Transverse colon (tissue), 4 donors: ENCODE measurements at regions of chr17 and their contacts with region 1.

Region 1: DNA sequence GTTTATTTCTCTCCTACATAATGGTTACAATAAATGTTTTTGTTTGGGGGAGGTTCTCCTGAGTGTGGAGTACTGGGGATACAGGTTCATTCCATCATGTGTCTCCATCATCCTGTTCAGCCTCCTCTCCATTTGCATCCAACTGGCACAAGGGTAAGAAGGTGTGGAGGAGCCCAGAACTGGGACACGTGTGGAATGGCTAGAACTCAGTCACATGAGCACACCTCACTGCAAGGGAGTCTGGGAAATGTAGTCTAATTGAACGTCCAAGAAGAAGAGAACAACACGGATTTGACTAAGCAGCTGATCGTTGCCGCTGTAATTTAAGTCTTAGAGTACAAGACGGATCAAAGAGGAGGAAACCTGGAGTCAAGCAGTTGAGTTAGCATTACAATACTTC is 6.1 kb downstream of the OR1A1 start:
- DNase-seq: no peak
- H3K4me3 ChIP-seq: no peak overlapping the region
- H3K27ac ChIP-seq: no peak overlapping the region
- H3K4me1 ChIP-seq: no peaks in the 10 kb centered on the region
- H3K27me3 ChIP-seq: no peaks in the 10 kb centered on the region
- CTCF ChIP-seq: no peak
- EP300 ChIP-seq: no peak
- POLR2A ChIP-seq: no peak

Region 2: GRCh38 chr17:2253768-2254406 is 959.7 kb before region 1 on chr17:
- in situ Hi-C with region 1: no loop called
- intact Hi-C with region 1: no loop called
- DNase-seq: no peak
- H3K4me3 ChIP-seq: no peak overlapping the region
- H3K27ac ChIP-seq: no peak overlapping the region
- H3K4me1 ChIP-seq: no peaks in the 10 kb centered on the region
- H3K27me3 ChIP-seq: no peaks in the 10 kb centered on the region
- CTCF ChIP-seq: no peak
- EP300 ChIP-seq: no peak
- POLR2A ChIP-seq: no peak

Region 3: GRCh38 chr17:3104322-3104721 is 109.3 kb before region 1 on chr17 and contains the start of gene OR1D2:
- in situ Hi-C with region 1: no loop called
- intact Hi-C with region 1: no loop called
- DNase-seq: no peak
- H3K4me3 ChIP-seq: no peak within 1 kb of the TSS
- H3K27ac ChIP-seq: no peak within 1 kb of the TSS
- H3K4me1 ChIP-seq: no peaks in the 10 kb centered on the region
- H3K27me3 ChIP-seq: no peaks in the 10 kb centered on the region
- CTCF ChIP-seq: no peak
- EP300 ChIP-seq: no peak
- POLR2A ChIP-seq: no peak
- total RNA-seq, gene OR1D2: not detected

Region 4: GRCh38 chr17:3318336-3318735 is 104.7 kb after region 1 on chr17:
- in situ Hi-C with region 1: loop called in 1 of 4 experiments (anchors 25 kb)
- intact Hi-C with region 1: no loop called
- DNase-seq: no peak
- H3K4me3 ChIP-seq: no peak overlapping the region
- H3K27ac ChIP-seq: no peak overlapping the region
- H3K4me1 ChIP-seq: no peaks in the 10 kb centered on the region
- H3K27me3 ChIP-seq: no peaks in the 10 kb centered on the region
- CTCF ChIP-seq: no peak
- EP300 ChIP-seq: no peak
- POLR2A ChIP-seq: no peak